ENCODE measurements at regions of chr2 and their contacts with region 1.

Region 1: DNA sequence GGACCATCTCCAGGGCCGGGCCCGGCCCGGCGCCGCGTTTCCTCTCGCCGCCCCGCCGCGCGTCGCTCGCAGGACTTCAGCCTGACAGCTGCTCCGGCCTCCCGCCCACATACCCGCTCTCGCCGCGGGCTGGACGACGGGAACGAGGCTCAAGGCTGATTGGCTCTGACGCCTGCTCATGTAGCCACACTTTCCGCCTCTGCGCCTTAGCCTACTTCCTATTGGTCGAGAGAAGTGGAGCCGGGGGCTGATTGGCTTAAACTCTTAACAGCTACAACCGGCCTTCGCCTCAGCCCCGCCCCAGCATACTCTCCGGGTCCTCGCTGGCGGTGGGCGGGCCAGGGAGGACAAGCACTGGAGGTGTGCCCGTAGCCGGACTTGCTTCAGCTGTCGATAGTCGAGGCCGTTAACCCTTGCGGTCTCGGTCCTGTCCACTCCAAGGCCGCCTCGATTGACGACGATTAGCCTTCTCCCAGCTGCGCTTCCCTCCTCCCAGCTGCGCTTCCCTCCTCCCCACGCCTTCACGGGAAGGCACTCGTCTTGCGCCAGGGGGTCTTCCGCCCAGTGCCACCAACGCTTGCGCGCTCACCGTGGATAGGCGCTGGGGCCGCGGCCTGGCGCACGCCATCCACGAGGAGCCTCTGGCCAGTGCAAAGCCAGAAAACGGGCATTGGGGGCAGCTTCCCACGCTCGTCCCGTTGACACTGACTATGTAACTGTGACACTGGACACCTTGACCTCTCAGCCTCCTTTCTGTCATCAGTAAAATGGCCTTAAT is at the start of gene PRADC1:
- DNase-seq: peak; percentile 97
- H3K4me3 ChIP-seq: peak within 1 kb of the TSS; percentile 96 to 99
- H3K27ac ChIP-seq: peak within 1 kb of the TSS; percentile 91 to 95
- H3K4me1 ChIP-seq: peaks cover 0 to 20% of the 10 kb centered on the region in 2 experiments; a peak in 3 of 4 replicates
- H3K27me3 ChIP-seq: no peaks in the 10 kb centered on the region
- CTCF ChIP-seq: no peak
- EP300 ChIP-seq: no peak
- RAD21 ChIP-seq: no peak
- polyA plus RNA-seq, gene PRADC1: 8.5 and 9.6 TPM in 2 replicates

Region 2: GRCh38 chr2:73243884-73244570 is 10.7 kb after region 1 on chr2:
- CTCF ChIA-PET with region 1: interaction called, 5 read pairs
- POLR2A ChIA-PET with region 1: interaction called, 13 read pairs
- DNase-seq: peak; percentile 74
- H3K4me3 ChIP-seq: no peak overlapping the region
- H3K27ac ChIP-seq: peak overlapping the region in 1 of 2 experiments; percentile 81; a peak in 2 of 4 replicates
- H3K4me1 ChIP-seq: peaks cover 0 to 22% of the 10 kb centered on the region in 2 experiments; a peak in 2 of 4 replicates
- H3K27me3 ChIP-seq: no peaks in the 10 kb centered on the region
- CTCF ChIP-seq: no peak
- EP300 ChIP-seq: peak in 1 of 2 experiments; percentile 77; a peak in 2 of 4 replicates
- RAD21 ChIP-seq: no peak

Region 3: GRCh38 chr2:73736855-73737779 is 503.8 kb after region 1 on chr2 and contains the start of gene TPRKB:
- CTCF ChIA-PET with region 1: no interaction called
- POLR2A ChIA-PET with region 1: interaction called, 11 read pairs
- DNase-seq: peak; percentile 95
- H3K4me3 ChIP-seq: peak within 1 kb of the TSS; percentile 94 to 95
- H3K27ac ChIP-seq: peak within 1 kb of the TSS; percentile 62 to 65
- H3K4me1 ChIP-seq: peaks cover 6 to 8% of the 10 kb centered on the region in 2 experiments; a peak in 3 of 4 replicates
- H3K27me3 ChIP-seq: no peaks in the 10 kb centered on the region
- CTCF ChIP-seq: no peak
- EP300 ChIP-seq: no peak; a peak in 2 of 4 replicates
- RAD21 ChIP-seq: no peak
- polyA plus RNA-seq, gene TPRKB: 32.1 and 44.5 TPM in 2 replicates